ENCODE measurements at regions of chr17 and their contacts with region 1.

Region 1: GRCh38 chr17:68812876-68813584 is 142.2 kb downstream of the ABCA8 start:
- H3K4me3 Mint-ChIP-seq: no peak overlapping the region
- H3K27ac Mint-ChIP-seq: peak overlapping the region; percentile 80
- H3K4me1 Mint-ChIP-seq: peaks cover 33% of the 10 kb centered on the region
- H3K27me3 Mint-ChIP-seq: no peaks in the 10 kb centered on the region

Region 2: GRCh38 chr17:68640242-68640989 is 172.6 kb before region 1 on chr17:
- intact Hi-C with region 1: no loop called
- H3K4me3 Mint-ChIP-seq: no peak overlapping the region
- H3K27ac Mint-ChIP-seq: no peak overlapping the region
- H3K4me1 Mint-ChIP-seq: no peaks in the 10 kb centered on the region
- H3K27me3 Mint-ChIP-seq: peaks cover 9% of the 10 kb centered on the region

Region 3: GRCh38 chr17:68674029-68674940 is 138.7 kb before region 1 on chr17:
- intact Hi-C with region 1: no loop called
- H3K4me3 Mint-ChIP-seq: no peak overlapping the region
- H3K27ac Mint-ChIP-seq: no peak overlapping the region
- H3K4me1 Mint-ChIP-seq: no peaks in the 10 kb centered on the region
- H3K27me3 Mint-ChIP-seq: peaks cover 19% of the 10 kb centered on the region

Region 4: GRCh38 chr17:68785565-68786524 is 27.2 kb before region 1 on chr17:
- intact Hi-C with region 1: loop called (anchors 1 kb)
- H3K4me3 Mint-ChIP-seq: no peak overlapping the region
- H3K27ac Mint-ChIP-seq: no peak overlapping the region
- H3K4me1 Mint-ChIP-seq: peaks cover 14% of the 10 kb centered on the region
- H3K27me3 Mint-ChIP-seq: peaks cover 2% of the 10 kb centered on the region

Measured in dendritic cell treated with granulocyte-macrophage colony-stimulating factor and Interleukin-4, amounts not matched to agents 40 ng/mL and 50 ng/mL, for 4 days (primary cell).